Aorta (tissue), 5 donors: ENCODE measurements at regions of chr12 and their contacts with region 1.

Region 1: GRCh38 chr12:55659486-55660385 is 23.0 kb downstream of the OR10P1 start:
- DNase-seq: no peak
- ATAC-seq: no peak
- H3K4me3 ChIP-seq: no peak overlapping the region
- H3K27ac ChIP-seq: no peak overlapping the region
- H3K4me1 ChIP-seq: no peaks in the 10 kb centered on the region
- H3K27me3 ChIP-seq: no peaks in the 10 kb centered on the region

Region 2: GRCh38 chr12:55724226-55724939 is 64.6 kb after region 1 on chr12:
- intact Hi-C with region 1: loop called in 1 of 2 experiments (anchors 5 kb)
- DNase-seq: peak; percentile 76 to 87
- ATAC-seq: no peak
- H3K4me3 ChIP-seq: no peak overlapping the region
- H3K27ac ChIP-seq: no peak overlapping the region
- H3K4me1 ChIP-seq: no peaks in the 10 kb centered on the region
- H3K27me3 ChIP-seq: no peaks in the 10 kb centered on the region

Region 3: DNA sequence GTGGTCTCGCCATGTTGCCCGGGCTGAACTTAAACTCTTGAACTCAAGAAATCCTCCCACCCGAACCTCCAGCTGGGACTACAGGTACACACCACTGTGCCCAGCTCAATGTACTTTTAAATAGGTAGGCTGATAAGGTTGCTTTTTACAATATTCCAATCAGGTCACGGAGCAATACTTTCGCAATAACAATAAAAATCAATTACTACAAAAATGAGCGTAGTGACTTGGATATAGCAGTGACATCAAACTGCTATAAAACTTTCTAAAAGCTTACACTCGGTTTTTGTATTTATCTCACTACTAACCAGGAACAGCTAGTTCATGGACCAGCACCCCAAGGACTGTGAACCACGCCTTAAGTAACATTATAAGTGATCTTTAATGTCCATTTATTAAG is 147.2 kb after region 1 on chr12:
- intact Hi-C with region 1: loop called in 1 of 2 experiments (anchors 10 kb)
- DNase-seq: no peak
- ATAC-seq: no peak
- H3K4me3 ChIP-seq: no peak overlapping the region
- H3K27ac ChIP-seq: no peak overlapping the region
- H3K4me1 ChIP-seq: no peaks in the 10 kb centered on the region
- H3K27me3 ChIP-seq: no peaks in the 10 kb centered on the region

Region 4: DNA sequence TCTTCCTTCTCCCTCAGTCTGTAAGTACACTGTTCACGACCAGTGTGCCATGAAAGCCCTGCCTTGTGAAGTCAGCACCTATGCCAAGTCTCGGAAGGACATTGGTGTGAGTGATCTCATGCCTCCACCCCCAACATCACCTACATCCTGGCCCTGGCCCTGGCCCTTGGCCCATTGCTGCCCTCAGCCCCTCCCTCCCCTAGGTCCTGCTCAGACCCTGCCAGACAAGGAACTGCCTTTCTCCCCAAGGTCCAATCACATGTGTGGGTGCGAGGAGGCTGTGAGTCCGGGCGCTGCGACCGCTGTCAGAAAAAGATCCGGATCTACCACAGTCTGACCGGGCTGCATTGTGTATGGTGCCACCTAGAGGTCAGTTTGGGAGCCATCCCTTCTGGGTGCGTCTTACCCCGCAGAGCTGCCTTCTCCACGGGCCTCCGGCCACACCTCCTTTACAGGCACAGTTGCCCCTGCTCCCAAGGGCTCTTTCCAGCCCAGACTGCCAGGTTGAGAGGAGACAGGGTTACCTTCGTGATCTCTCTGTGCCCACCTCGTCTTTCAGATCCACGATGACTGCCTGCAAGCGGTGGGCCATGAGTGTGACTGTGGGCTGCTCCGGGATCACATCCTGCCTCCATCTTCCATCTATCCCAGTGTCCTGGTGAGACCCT is 280.5 kb after region 1 on chr12:
- intact Hi-C with region 1: loop called in 1 of 2 experiments (anchors 10 kb)
- DNase-seq: peak; percentile 88 to 91
- ATAC-seq: peak; percentile 92
- H3K4me3 ChIP-seq: no peak overlapping the region
- H3K27ac ChIP-seq: peak overlapping the region in 1 of 2 donors; percentile 15
- H3K4me1 ChIP-seq: no peaks in the 10 kb centered on the region
- H3K27me3 ChIP-seq: no peaks in the 10 kb centered on the region